Caco-2 (cell line): ENCODE measurements at regions of chr17 and their contacts with region 1.

Region 1: GRCh38 chr17:27236717-27237315 is 57.1 kb upstream of the WSB1 start:
- DNase-seq: peak; percentile 69 to 75
- H3K4me3 ChIP-seq: no peak overlapping the region
- H3K4me3 Mint-ChIP-seq: no peak overlapping the region
- H3K27ac Mint-ChIP-seq: no peak overlapping the region
- H3K4me1 ChIP-seq: peaks cover 27% of the 10 kb centered on the region
- H3K4me1 Mint-ChIP-seq: peaks cover 6% of the 10 kb centered on the region
- H3K27me3 ChIP-seq: no peaks in the 10 kb centered on the region
- H3K27me3 Mint-ChIP-seq: no peaks in the 10 kb centered on the region
- CTCF ChIP-seq: peak; percentile 89 to 94

Region 2: DNA sequence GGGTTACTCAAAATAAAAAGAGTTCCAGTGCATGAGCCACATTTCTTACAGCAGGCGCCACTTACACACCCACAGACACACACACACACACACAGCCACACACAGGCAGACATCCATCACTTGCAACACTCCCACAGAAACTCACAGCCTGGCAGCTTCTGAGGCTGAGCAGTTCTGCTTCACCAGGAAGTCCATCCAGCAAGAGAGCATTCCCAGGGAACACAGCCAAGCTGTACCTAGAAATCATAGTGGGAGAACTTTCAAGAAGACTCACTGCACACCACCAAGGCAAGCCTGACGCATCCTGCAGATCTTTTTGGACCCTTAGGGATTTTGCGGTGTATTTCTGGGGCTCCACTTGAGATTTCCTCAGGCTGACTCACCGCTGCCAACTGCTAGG is 83.8 kb before region 1 on chr17:
- CTCF ChIA-PET with region 1: no interaction called
- POLR2A ChIA-PET with region 1: no interaction called
- intact Hi-C with region 1: no loop called
- DNase-seq: no peak
- H3K4me3 ChIP-seq: no peak overlapping the region
- H3K4me3 Mint-ChIP-seq: no peak overlapping the region
- H3K27ac Mint-ChIP-seq: no peak overlapping the region
- H3K4me1 ChIP-seq: no peaks in the 10 kb centered on the region
- H3K4me1 Mint-ChIP-seq: no peaks in the 10 kb centered on the region
- H3K27me3 ChIP-seq: no peaks in the 10 kb centered on the region
- H3K27me3 Mint-ChIP-seq: no peaks in the 10 kb centered on the region
- CTCF ChIP-seq: no peak

Region 3: GRCh38 chr17:27206447-27206846 is 30.4 kb before region 1 on chr17:
- CTCF ChIA-PET with region 1: interaction called, 8 read pairs
- POLR2A ChIA-PET with region 1: no interaction called
- intact Hi-C with region 1: loop called (anchors 1 kb)
- DNase-seq: peak in 1 of 2 experiments; percentile 10
- H3K4me3 ChIP-seq: no peak overlapping the region
- H3K4me3 Mint-ChIP-seq: no peak overlapping the region
- H3K27ac Mint-ChIP-seq: no peak overlapping the region
- H3K4me1 ChIP-seq: no peaks in the 10 kb centered on the region
- H3K4me1 Mint-ChIP-seq: no peaks in the 10 kb centered on the region
- H3K27me3 ChIP-seq: no peaks in the 10 kb centered on the region
- H3K27me3 Mint-ChIP-seq: peaks cover 5% of the 10 kb centered on the region
- CTCF ChIP-seq: peak in 1 of 2 experiments; percentile 27

Region 4: DNA sequence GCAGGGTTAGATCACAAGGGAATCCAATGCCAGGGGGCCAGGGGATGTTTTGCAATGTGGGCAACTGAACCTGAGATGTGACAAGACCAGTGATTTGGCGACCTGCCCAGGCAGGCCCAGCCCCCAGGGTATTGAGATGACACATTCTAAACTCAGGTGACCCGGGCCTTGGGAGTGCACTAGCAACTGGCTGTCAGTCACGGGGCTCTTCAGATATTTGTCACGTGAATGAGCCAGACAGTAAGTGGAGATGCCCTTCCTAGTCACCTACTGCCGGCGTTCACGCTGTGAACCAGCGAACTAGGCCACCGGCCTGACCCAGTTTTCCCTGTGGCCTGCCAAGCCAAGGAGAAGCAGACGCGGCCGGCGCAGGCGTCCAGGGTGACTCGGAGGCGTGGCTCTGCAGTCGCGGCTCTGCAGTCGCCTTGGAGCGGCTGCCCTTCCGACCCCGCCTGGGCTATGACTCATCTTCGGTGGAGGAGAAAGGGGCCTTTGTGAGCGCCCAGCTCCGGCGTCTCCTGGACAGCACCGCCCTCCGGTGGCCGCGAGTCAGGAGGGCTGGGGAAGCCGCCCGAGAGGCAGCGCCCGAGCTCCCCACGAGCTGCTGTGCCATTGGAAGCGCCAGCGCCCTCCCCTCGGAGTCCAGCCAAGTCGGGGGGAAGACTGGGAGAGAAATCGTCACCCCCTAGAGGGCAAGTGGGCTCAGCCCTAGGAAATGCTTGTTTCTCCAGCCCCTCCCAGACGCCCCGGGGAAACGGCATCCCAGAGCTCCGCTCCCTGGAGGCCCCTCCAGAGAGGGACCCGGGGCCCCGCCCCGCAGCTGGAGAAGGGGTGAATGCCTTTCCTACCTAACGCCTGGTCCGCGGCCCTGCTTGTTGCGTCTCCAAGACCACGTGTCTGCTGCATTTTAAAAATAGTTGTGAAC is 95.9 kb after region 1 on chr17:
- CTCF ChIA-PET with region 1: interaction called, 122 read pairs
- POLR2A ChIA-PET with region 1: interaction called, 8 read pairs
- intact Hi-C with region 1: loop called (anchors 1 kb)
- DNase-seq: peak; percentile 99
- H3K4me3 ChIP-seq: peak overlapping the region; percentile 44
- H3K4me3 Mint-ChIP-seq: peak overlapping the region; percentile 73
- H3K27ac Mint-ChIP-seq: peak overlapping the region; percentile 93
- H3K4me1 ChIP-seq: peaks cover 10% of the 10 kb centered on the region
- H3K4me1 Mint-ChIP-seq: peaks cover 26% of the 10 kb centered on the region
- H3K27me3 ChIP-seq: no peaks in the 10 kb centered on the region
- H3K27me3 Mint-ChIP-seq: no peaks in the 10 kb centered on the region
- CTCF ChIP-seq: peak; percentile 93 to 94

Region 5: DNA sequence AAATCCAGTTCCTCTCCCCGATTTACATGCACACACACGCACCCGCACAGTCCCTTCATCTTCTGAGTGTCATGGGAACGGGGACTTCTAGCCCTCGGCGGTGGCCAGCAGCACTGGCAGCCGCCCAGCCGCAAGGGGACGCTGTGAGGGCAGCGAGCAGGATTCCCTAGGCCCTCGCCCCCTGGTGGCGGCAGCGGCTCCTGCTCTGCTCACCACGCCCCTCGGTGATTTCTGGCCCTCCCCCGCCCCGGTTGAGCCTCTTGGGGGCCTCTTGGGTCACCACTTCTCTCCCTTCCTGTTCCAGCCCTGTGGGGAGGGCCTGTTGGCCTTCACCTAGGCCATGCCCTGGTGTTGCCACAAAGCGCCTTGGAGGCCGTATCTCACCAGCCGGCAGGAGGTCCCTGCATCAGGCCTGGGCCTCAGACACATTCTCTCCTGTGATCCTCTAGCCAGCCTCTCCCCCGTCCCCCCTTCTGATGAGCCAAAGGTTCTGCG is 144.2 kb after region 1 on chr17:
- CTCF ChIA-PET with region 1: interaction called, 18 read pairs
- POLR2A ChIA-PET with region 1: no interaction called
- intact Hi-C with region 1: loop called (anchors 1 kb)
- DNase-seq: peak; percentile 77 to 82
- H3K4me3 ChIP-seq: no peak overlapping the region
- H3K4me3 Mint-ChIP-seq: no peak overlapping the region
- H3K27ac Mint-ChIP-seq: no peak overlapping the region
- H3K4me1 ChIP-seq: 0 out of 2 replicates have a peak, but pooled peaks cover 3% of the 10 kb centered on the region
- H3K4me1 Mint-ChIP-seq: no peaks in the 10 kb centered on the region
- H3K27me3 ChIP-seq: no peaks in the 10 kb centered on the region
- H3K27me3 Mint-ChIP-seq: peaks cover 4% of the 10 kb centered on the region
- CTCF ChIP-seq: peak; percentile 93 to 94